ENCODE measurements at regions of chr10 and their contacts with region 1.

Region 1: DNA sequence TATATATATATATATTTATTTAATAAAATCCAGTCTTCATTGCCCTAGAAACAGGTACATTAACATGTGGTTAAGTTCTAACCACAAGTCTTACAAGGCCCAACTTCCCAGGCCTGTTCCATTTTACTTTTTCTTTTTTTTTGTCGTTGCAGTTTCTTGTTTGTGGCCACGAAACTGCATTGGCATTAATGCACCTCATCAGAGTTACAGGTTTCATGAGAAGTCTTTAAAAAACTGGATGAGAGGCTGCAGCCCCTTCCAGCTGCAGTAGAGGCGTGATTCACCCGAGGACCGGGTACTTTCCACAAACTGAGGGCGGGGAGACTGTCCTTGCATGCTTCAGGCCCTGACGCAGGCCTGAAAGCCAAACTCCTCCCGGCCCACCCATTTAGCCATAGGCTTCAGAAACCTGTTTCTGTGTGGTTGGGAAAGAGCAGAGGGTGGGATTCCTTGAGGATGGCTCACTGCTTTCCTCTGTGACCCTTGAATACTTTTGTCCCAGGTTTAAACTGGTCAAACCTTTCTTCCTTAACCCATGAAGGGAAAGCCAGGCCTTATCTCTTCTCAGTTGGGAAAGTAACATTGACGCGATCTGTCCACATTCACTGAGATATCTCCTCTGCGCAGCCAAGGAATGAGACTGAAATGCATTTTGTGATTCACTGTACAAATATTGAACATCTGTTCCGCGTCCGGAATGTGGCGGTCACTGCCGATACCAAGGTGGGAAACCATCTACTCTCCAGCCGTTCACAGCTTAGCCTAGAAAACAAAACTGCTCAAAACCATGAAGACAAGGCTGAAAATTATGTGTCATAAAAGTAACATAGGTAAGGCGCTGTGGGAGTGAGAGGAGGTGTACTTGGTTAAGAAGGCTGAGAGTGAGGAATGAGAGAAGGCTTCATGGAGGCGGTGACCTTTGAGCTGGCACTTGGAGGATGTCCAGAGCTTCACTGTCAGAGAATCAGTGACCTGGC is 311.7 kb downstream of the GATA3 start:
- DNase-seq: peak in 8 of 9 experiments; percentile 9 to 80 (median 36)
- ATAC-seq: peak; percentile 66
- H3K4me3 ChIP-seq: no peak overlapping the region
- H3K4me3 Mint-ChIP-seq: no peak overlapping the region
- H3K27ac ChIP-seq: no peak overlapping the region
- H3K27ac Mint-ChIP-seq: no peak overlapping the region
- H3K4me1 ChIP-seq: peaks cover 3% of the 10 kb centered on the region
- H3K4me1 Mint-ChIP-seq: peaks cover 43% of the 10 kb centered on the region
- H3K27me3 ChIP-seq: no peaks in the 10 kb centered on the region
- H3K27me3 Mint-ChIP-seq: no peaks in the 10 kb centered on the region
- CTCF ChIP-seq: no peak

Region 2: GRCh38 chr10:8321990-8322389 is 44.2 kb before region 1 on chr10:
- CTCF ChIA-PET with region 1: no interaction called
- POLR2A ChIA-PET with region 1: no interaction called
- intact Hi-C with region 1: no loop called
- DNase-seq: no peak
- ATAC-seq: no peak
- H3K4me3 ChIP-seq: no peak overlapping the region
- H3K4me3 Mint-ChIP-seq: no peak overlapping the region
- H3K27ac ChIP-seq: no peak overlapping the region
- H3K27ac Mint-ChIP-seq: no peak overlapping the region
- H3K4me1 ChIP-seq: no peaks in the 10 kb centered on the region
- H3K4me1 Mint-ChIP-seq: no peaks in the 10 kb centered on the region
- H3K27me3 ChIP-seq: no peaks in the 10 kb centered on the region
- H3K27me3 Mint-ChIP-seq: no peaks in the 10 kb centered on the region
- CTCF ChIP-seq: no peak

Region 3: GRCh38 chr10:8379906-8380832 is 13.9 kb after region 1 on chr10:
- CTCF ChIA-PET with region 1: no interaction called
- POLR2A ChIA-PET with region 1: no interaction called
- intact Hi-C with region 1: loop called in 1 of 2 experiments (anchors 1 kb)
- DNase-seq: no peak
- ATAC-seq: no peak
- H3K4me3 ChIP-seq: no peak overlapping the region
- H3K4me3 Mint-ChIP-seq: no peak overlapping the region
- H3K27ac ChIP-seq: no peak overlapping the region
- H3K27ac Mint-ChIP-seq: no peak overlapping the region
- H3K4me1 ChIP-seq: no peaks in the 10 kb centered on the region
- H3K4me1 Mint-ChIP-seq: no peaks in the 10 kb centered on the region
- H3K27me3 ChIP-seq: no peaks in the 10 kb centered on the region
- H3K27me3 Mint-ChIP-seq: no peaks in the 10 kb centered on the region
- CTCF ChIP-seq: no peak

Region 4: DNA sequence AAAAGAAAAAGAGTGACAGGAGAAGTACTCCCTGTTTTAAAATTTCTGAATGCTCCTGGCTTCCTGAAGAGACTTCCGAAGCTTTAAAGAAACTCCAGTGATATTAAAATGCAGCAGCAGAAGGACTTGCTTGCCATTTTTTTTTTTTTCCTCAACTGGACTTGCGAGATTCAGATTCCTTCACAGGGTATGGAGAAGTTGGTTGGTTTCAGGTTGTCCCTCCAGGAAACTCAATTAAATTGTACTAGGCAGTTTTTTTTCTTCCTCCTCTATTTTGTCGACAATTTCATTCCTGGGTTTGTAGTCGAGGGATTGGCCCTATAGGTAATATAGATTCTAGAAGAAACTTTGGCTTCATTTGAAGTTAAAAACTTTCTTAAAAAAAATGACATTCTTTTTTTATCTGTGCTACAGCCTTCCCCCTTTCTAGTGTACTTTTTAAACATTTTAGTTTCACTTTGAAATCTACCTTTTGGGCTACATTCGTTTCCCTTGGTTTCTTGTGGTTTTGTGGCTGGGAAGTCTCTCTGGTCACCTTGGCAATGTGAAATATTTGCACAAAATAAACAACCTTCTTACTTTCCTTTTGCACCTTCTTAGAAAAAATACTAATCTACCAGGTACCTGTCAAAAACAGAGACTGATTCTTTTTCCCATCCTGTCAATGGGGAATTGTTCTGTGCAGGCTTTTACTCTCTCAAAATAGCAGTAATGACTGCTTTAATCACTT is 38.3 kb after region 1 on chr10:
- CTCF ChIA-PET with region 1: no interaction called
- POLR2A ChIA-PET with region 1: interaction called, 3 read pairs
- intact Hi-C with region 1: loop called in 1 of 2 experiments (anchors 2 kb)
- DNase-seq: peak in 6 of 9 experiments; percentile 31 to 93 (median 48)
- ATAC-seq: peak; percentile 71
- H3K4me3 ChIP-seq: peak overlapping the region; percentile 14 to 41
- H3K4me3 Mint-ChIP-seq: peak overlapping the region; percentile 74
- H3K27ac ChIP-seq: peak overlapping the region; percentile 66 to 83
- H3K27ac Mint-ChIP-seq: peak overlapping the region; percentile 90
- H3K4me1 ChIP-seq: peaks cover 43% of the 10 kb centered on the region
- H3K4me1 Mint-ChIP-seq: peaks cover 67% of the 10 kb centered on the region
- H3K27me3 ChIP-seq: no peaks in the 10 kb centered on the region
- H3K27me3 Mint-ChIP-seq: no peaks in the 10 kb centered on the region
- CTCF ChIP-seq: no peak

Region 5: GRCh38 chr10:8416192-8416701 is 50.0 kb after region 1 on chr10:
- CTCF ChIA-PET with region 1: no interaction called
- POLR2A ChIA-PET with region 1: no interaction called
- intact Hi-C with region 1: loop called in 1 of 2 experiments (anchors 1 kb)
- DNase-seq: peak in 7 of 9 experiments; percentile 18 to 88 (median 44)
- ATAC-seq: peak; percentile 84
- H3K4me3 ChIP-seq: no peak overlapping the region
- H3K4me3 Mint-ChIP-seq: no peak overlapping the region
- H3K27ac ChIP-seq: peak overlapping the region; percentile 50 to 78
- H3K27ac Mint-ChIP-seq: peak overlapping the region; percentile 96
- H3K4me1 ChIP-seq: peaks cover 19% of the 10 kb centered on the region
- H3K4me1 Mint-ChIP-seq: peaks cover 30% of the 10 kb centered on the region
- H3K27me3 ChIP-seq: no peaks in the 10 kb centered on the region
- H3K27me3 Mint-ChIP-seq: no peaks in the 10 kb centered on the region
- CTCF ChIP-seq: no peak